Breast epithelium (tissue), 4 donors: ENCODE measurements at regions of chr11 and their contacts with region 1.

Region 1: DNA sequence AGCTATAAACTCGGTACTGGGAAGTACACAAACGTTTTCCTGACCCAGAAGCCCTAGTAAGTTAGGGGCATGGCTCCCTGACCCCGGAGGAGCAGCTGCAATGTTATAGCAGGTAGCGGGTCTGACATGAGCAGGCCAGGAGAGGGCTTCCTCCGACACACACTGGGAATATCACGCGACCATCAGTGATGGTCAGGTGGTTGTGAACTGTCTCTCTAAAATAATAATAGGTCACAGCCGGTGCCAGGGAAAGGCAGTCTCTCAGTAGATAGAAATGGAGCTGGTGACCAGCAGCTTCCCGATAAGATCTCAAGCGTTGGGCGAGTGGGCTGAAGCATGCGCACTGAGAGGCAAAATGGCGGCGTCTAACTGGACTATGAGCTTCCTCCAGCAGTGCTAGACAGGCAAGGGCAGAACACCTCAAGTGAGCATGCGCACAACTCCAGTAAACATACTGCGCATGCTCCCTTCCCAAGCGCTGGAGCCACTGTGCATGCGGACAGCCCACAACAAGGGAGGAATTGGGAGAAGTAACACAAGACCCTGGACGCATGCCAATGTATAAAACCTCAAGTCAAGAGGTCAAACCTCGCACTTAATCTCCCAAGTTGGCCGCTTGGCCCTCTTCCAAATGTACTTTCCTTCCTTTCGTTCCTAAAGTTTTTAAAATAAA is 22.3 kb upstream of the TESMIN start:
- DNase-seq: no peak
- H3K4me3 ChIP-seq: no peak overlapping the region
- H3K27ac ChIP-seq: no peak overlapping the region
- H3K4me1 ChIP-seq: no peaks in the 10 kb centered on the region
- H3K27me3 ChIP-seq: no peaks in the 10 kb centered on the region
- CTCF ChIP-seq: no peak
- POLR2A ChIP-seq: no peak

Region 2: DNA sequence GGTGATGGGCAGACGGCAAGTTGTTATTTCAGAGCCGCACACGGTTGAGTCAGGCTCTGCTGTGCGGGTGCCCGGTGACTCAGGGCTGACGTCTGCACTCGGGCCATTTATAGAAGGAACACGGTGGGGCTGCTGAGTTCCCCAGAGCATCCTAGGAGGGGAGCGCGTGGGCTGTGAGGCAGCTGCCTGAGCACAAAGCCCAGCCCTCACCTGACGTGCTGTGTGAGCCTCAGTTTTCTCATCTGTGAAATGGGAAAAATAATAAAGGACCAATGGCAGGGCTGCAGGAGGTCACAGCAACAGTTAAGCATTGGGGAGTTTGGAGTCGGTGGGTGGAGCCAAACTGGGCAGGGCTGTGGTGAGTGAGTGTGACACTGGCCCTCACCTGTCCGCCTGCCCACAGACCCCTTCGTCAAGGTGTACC is 1728.3 kb before region 1 on chr11:
- intact Hi-C with region 1: no loop called
- DNase-seq: no peak
- H3K4me3 ChIP-seq: no peak overlapping the region
- H3K27ac ChIP-seq: no peak overlapping the region
- H3K4me1 ChIP-seq: no peaks in the 10 kb centered on the region
- H3K27me3 ChIP-seq: no peaks in the 10 kb centered on the region
- CTCF ChIP-seq: no peak
- POLR2A ChIP-seq: no peak

Region 3: GRCh38 chr11:67996622-67997474 is 776.8 kb before region 1 on chr11:
- intact Hi-C with region 1: no loop called
- DNase-seq: no peak
- H3K4me3 ChIP-seq: no peak overlapping the region
- H3K27ac ChIP-seq: no peak overlapping the region
- H3K4me1 ChIP-seq: no peaks in the 10 kb centered on the region
- H3K27me3 ChIP-seq: no peaks in the 10 kb centered on the region
- CTCF ChIP-seq: no peak
- POLR2A ChIP-seq: no peak

Region 4: DNA sequence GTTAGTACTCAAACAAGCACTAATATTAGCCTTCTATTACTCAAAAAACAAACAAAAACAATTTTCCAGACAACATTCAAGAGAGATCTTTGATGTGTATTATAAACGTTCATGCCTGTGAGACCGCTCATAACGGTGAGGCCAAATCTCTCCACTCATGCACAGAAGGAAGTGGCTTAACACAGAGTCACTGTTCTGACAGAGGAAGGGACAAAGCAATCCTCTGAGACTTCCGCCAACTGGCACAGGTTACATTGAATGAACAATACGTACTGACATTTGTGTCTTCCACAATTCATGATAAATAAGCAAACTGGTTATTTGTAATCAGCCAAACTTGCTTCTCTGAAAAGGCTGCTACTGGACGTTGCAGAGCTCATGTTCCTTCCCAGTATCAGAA is 683.0 kb before region 1 on chr11:
- intact Hi-C with region 1: loop called (anchors 5 kb)
- DNase-seq: peak in 1 of 2 donors; percentile 58
- H3K4me3 ChIP-seq: no peak overlapping the region
- H3K27ac ChIP-seq: peak overlapping the region; percentile 20 to 34
- H3K4me1 ChIP-seq: no peaks in the 10 kb centered on the region
- H3K27me3 ChIP-seq: no peaks in the 10 kb centered on the region
- CTCF ChIP-seq: no peak
- POLR2A ChIP-seq: no peak

Region 5: DNA sequence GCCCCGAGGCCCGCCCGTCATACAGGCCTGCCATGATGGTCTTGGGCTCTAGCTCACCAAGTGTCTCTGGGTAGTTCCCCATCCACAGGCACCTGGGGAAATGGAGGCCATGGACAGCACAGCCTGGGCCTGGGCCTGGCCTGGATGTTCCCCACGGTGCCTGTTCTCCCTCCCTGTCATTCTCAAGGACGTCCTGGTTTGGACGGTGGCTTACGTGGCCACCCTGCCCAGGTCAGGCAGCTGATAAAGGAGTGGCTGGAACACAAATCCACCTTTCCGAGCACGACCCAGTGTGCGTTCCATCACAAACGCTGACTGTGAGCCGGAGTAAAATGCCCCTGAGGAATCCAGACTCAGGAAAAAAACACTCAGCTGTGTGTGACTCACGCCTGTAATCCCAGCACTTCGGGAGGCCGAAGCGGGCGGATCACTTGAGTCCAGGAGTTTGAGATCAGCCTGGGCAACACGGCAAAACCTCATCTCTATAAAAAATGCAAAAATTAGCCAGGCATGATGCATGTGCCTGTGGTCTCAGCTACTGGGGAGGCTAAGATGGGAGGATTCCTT is 18.8 kb after region 1 on chr11:
- intact Hi-C with region 1: no loop called
- DNase-seq: no peak
- H3K4me3 ChIP-seq: no peak overlapping the region
- H3K27ac ChIP-seq: no peak overlapping the region
- H3K4me1 ChIP-seq: no peaks in the 10 kb centered on the region
- H3K27me3 ChIP-seq: no peaks in the 10 kb centered on the region
- CTCF ChIP-seq: no peak
- POLR2A ChIP-seq: no peak